HEK293T (cell line): ENCODE measurements at regions of chr15 and their contacts with region 1.

Region 1: DNA sequence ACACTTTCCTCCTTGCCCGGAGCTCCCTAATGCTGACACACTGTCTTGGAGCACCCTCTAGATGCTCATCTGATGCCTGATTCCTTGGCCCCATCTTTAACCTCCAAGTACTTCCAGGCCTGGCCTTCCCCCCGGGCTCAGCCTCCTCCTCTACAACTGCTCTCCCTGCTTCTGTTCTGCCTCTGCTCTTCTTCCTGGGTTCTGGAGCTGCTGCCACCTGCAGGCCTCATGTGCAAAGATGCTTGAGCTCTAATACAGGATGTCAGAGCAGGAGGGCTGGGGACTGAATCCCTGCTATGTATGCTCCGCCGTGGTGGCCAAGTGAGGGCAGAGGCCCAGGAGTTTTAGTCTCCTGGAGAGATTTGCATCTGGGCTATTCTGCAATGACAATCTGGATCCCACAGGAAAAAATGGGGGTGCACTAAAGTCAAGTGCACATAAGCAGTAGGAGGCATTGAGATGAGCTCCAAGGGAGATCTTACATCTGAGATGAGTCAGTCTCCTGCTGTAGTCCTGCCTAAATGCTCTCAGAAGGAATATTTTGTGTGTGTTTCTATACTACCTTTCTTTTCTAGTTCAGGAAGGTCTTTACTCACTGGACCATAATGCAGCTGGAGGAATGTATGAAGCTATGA is 296.3 kb downstream of the UACA start:
- DNase-seq: peak; percentile 73

Region 2: GRCh38 chr15:70451821-70452653 is 15.0 kb before region 1 on chr15:
- CTCF ChIA-PET with region 1: interaction called, 13 read pairs
- POLR2A ChIA-PET with region 1: no interaction called
- DNase-seq: no peak

Region 3: GRCh38 chr15:70488002-70488605 is 21.1 kb after region 1 on chr15:
- CTCF ChIA-PET with region 1: interaction called, 28 read pairs
- POLR2A ChIA-PET with region 1: no interaction called
- DNase-seq: peak; percentile 80